A673 (cell line): ENCODE measurements at regions of chr17 and their contacts with region 1.

Region 1: GRCh38 chr17:29948448-29949215 is 7.2 kb downstream of the EFCAB5 start:
- DNase-seq: no peak
- H3K4me3 ChIP-seq: no peak overlapping the region
- H3K27ac ChIP-seq: no peak overlapping the region
- H3K4me1 ChIP-seq: no peaks in the 10 kb centered on the region
- H3K27me3 ChIP-seq: no peaks in the 10 kb centered on the region
- CTCF ChIP-seq: no peak

Region 2: GRCh38 chr17:31900877-31901276 is 1952.2 kb after region 1 on chr17:
- CTCF ChIA-PET with region 1: no interaction called
- POLR2A ChIA-PET with region 1: interaction called, 11 read pairs
- intact Hi-C with region 1: no loop called
- DNase-seq: no peak
- H3K4me3 ChIP-seq: peak overlapping the region; percentile 84
- H3K27ac ChIP-seq: peak overlapping the region; percentile 63
- H3K4me1 ChIP-seq: no peaks in the 10 kb centered on the region
- H3K27me3 ChIP-seq: no peaks in the 10 kb centered on the region
- CTCF ChIP-seq: no peak